A549 (cell line): ENCODE measurements at regions of chr1 and their contacts with region 1.

Region 1: DNA sequence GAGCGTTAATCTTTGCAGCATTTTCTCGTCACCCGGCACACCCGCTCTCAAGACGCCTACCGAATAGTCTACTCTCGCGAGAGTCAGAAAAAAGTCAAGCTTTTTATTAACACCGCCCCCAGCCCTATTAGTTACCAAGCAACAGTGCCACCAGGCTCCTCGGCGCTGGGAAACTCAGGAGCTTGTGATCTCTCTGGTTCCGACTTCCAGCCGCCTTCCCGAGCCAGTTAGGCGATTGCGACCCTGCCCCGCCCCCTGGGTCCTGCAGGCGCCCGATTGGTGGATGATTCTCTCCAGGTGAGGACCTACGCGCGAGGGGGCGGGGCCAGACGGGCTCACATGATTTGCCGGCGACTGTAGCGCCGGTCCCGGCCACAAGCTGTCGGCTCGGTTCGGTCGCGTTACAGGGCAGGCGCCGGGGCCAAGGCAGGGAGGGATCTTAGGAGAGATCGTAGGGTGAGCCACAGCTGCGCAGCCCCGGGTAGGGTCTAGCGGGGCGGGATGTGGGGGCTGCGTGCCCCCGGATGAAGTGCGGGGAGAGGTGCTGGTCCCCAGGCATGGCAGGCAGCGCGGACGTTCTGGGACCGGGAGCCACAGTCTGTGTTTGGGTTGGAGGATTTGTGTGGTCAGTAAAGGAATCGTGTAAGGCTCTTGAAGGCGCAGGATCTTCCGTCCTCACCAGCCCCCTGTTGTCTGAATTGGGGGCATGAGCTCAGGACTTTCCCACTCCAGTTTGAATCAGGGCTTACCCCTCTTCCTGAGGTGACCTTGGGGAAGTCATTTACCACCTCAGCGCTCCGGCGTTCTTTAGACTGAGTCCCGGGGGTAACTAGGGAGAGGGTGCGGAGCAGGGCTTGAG is at the start of gene PFKFB2:
- DNase-seq: peak; percentile 98
- ATAC-seq: peak; percentile 88 to 89
- H3K4me3 ChIP-seq: peak within 1 kb of the TSS; percentile 91
- H3K27ac ChIP-seq: peak within 1 kb of the TSS; percentile 94 to 97
- H3K4me1 ChIP-seq: peaks cover 27% of the 10 kb centered on the region
- CTCF ChIP-seq: no peak
- EP300 ChIP-seq: no peak
- POLR2A ChIP-seq: peak; percentile 84
- RAD21 ChIP-seq: 0 out of 5 replicates have a peak, but pooled peaks have one; percentile 2 to 16
- polyA plus RNA-seq, gene PFKFB2: 6.8 and 7.4 TPM in 2 replicates

Region 2: GRCh38 chr1:206905280-206906164 is 147.6 kb before region 1 on chr1:
- CTCF ChIA-PET with region 1: no interaction called
- POLR2A ChIA-PET with region 1: no interaction called
- DNase-seq: peak; percentile 71 to 77
- ATAC-seq: peak; percentile 57 to 79
- H3K4me3 ChIP-seq: no peak overlapping the region
- H3K27ac ChIP-seq: peak overlapping the region; percentile 13 to 73; a peak in 5 of 6 replicates
- H3K4me1 ChIP-seq: peaks cover 23% of the 10 kb centered on the region
- CTCF ChIP-seq: no peak
- EP300 ChIP-seq: no peak
- POLR2A ChIP-seq: no peak
- RAD21 ChIP-seq: no peak

Region 3: DNA sequence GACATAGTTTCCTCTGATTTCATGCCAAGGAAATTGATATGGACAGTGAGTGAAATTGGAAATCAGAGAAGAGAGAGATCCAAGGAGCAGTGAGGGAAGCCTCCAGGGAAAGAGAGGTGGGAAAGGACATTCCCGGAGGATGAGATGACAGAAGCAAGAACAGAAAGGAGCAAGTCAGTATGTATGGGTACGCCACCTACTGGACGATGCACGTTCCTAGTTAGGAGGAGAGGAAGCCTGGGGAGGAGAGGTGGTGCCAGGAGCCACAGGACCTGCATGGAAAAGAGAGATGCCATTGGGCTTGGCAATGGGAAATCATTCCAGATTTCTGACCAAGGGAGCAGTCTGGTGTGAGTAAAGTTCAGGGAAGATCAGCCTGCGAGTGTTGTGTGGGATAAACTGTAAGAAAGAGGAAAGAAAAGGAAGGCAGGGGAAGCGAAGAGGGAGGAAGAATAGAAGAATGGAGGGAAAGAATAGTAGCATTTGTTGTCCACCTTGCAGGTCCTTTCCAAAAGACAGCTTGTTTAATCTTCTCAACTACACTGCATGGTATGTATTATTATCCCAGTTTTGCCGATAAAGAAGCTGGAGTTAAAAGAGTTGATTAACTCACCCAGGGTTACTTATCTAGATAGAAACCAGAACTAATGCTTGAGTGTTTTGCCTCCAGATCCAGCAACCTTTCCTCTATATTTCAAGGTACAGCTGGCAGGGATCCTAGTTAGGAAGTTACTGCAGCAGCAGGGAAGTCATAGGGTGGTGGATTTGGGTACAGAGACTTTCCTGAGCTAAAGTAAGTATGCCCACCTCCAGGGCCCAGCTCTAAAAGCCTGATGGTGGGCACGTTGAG is 47.9 kb before region 1 on chr1:
- CTCF ChIA-PET with region 1: interaction called, 12 read pairs
- POLR2A ChIA-PET with region 1: interaction called, 14 read pairs
- DNase-seq: peak; percentile 77 to 88
- ATAC-seq: peak; percentile 79 to 90; a peak in 5 of 6 replicates
- H3K4me3 ChIP-seq: no peak overlapping the region
- H3K27ac ChIP-seq: peak overlapping the region; percentile 82 to 89
- H3K4me1 ChIP-seq: peaks cover 61% of the 10 kb centered on the region
- CTCF ChIP-seq: peak; percentile 63
- EP300 ChIP-seq: no peak
- POLR2A ChIP-seq: no peak
- RAD21 ChIP-seq: peak; percentile 35 to 54; a peak in 3 of 5 replicates

Region 4: GRCh38 chr1:207032528-207033017 is 20.6 kb before region 1 on chr1 and contains the start of gene C1orf116:
- CTCF ChIA-PET with region 1: interaction called, 40 read pairs
- POLR2A ChIA-PET with region 1: interaction called, 5 read pairs
- DNase-seq: peak; percentile 67 to 76
- ATAC-seq: peak; percentile 54 to 70; a peak in 4 of 6 replicates
- H3K4me3 ChIP-seq: peak within 1 kb of the TSS; percentile 33
- H3K27ac ChIP-seq: peak within 1 kb of the TSS; percentile 86 to 89
- H3K4me1 ChIP-seq: peaks cover 76% of the 10 kb centered on the region
- CTCF ChIP-seq: no peak
- EP300 ChIP-seq: no peak
- POLR2A ChIP-seq: no peak
- RAD21 ChIP-seq: no peak; a peak in 1 of 5 replicates
- polyA plus RNA-seq, gene C1orf116: 2.0 and 2.2 TPM in 2 replicates

Region 5: DNA sequence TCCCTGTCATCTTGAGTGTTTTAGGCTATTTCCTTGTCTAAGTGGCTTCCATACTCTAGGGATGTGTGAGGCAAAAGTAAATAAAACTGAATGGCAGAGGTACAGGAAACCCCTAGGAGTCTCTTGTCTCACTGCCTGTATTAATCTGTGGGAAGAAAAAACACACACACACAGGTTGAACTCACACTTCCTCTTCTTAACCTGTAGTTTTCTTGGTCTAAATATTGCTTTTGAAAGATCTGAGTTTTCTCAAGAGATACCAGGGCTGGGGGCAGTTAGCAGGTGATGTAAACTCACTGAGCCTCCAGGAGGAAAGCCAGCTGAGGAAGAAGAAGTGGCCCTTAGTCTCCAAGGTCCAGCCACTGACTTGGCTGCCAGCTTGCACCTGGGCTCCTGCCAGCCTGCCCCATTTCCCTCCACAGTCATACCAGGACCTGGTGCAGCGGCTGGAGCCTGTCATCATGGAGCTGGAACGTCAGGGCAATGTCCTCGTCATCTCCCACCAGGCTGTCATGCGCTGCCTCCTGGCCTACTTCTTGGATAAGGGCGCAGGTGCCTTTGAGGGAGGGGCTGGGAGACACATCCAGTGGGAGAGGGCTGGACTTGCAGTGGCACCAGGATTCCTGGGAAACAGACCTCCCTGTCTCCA is 16.8 kb after region 1 on chr1:
- CTCF ChIA-PET with region 1: interaction called, 11 read pairs
- POLR2A ChIA-PET with region 1: interaction called, 7 read pairs
- DNase-seq: no peak
- ATAC-seq: no peak
- H3K4me3 ChIP-seq: no peak overlapping the region
- H3K27ac ChIP-seq: no peak overlapping the region
- H3K4me1 ChIP-seq: peaks cover 10% of the 10 kb centered on the region
- CTCF ChIP-seq: no peak
- EP300 ChIP-seq: no peak
- POLR2A ChIP-seq: no peak
- RAD21 ChIP-seq: no peak

Region 6: GRCh38 chr1:207084701-207085180 is 31.6 kb after region 1 on chr1:
- CTCF ChIA-PET with region 1: interaction called, 17 read pairs
- POLR2A ChIA-PET with region 1: interaction called, 8 read pairs
- DNase-seq: peak; percentile 71 to 75
- ATAC-seq: peak; percentile 84 to 93
- H3K4me3 ChIP-seq: no peak overlapping the region
- H3K27ac ChIP-seq: no peak overlapping the region
- H3K4me1 ChIP-seq: peaks cover 43% of the 10 kb centered on the region
- CTCF ChIP-seq: peak; percentile 66
- EP300 ChIP-seq: no peak
- POLR2A ChIP-seq: no peak
- RAD21 ChIP-seq: peak; percentile 77 to 85